GM23248 (cell line): ENCODE measurements at regions of chr13 and their contacts with region 1.

Region 1: DNA sequence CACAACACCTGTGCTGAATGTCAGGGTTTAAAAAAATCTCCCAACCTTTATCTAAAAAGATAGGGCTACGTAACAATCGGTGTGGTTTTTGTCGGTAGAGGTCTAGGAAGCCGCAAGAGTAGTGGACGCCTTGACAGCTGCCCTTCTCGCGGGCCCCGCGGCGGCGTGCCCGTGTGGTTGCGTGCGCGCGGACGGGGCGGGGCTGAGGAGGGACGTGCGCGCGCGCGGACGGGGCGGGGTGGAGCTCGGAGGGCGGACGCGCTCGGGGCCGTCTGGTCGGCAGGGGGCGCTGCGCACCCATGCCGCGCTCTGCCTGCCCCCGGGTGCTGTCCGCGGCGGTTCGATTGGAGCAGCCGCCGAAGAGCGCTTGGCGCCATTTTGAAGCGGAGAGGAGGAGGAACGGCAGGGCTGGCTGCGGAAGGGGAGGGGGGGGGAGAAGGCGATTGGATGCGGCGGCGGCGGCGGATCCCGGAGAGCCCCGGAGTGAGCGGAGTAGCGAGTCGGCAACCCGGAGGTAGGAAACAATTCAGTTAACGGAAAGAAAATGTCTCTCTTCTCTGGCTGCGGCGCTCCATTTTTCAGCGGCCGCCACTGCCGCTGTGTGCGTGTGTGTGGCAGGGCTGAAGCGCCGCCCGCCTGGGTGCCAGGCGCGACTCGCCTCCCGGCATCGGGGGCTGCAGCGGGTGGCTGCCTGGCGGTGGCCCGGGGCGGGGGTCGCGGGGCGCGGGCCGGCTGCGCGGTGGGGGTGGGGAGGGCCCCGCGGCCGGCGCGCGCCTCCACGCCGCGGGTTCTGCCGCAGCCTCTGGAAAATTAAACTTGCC is at the start of gene PDS5B:
- DNase-seq: peak; percentile 98
- H3K4me3 ChIP-seq: peak within 1 kb of the TSS; percentile 97
- H3K27ac ChIP-seq: peak within 1 kb of the TSS; percentile 74
- H3K4me1 ChIP-seq: peaks cover 22% of the 10 kb centered on the region
- H3K27me3 ChIP-seq: no peaks in the 10 kb centered on the region
- total RNA-seq, gene PDS5B: 13.4 and 14.5 TPM in 2 replicates

Region 2: GRCh38 chr13:33723772-33724435 is 1137.6 kb after region 1 on chr13:
- in situ Hi-C with region 1: loop called (anchors 25 kb)
- DNase-seq: peak; percentile 90
- H3K4me3 ChIP-seq: no peak overlapping the region
- H3K27ac ChIP-seq: no peak overlapping the region
- H3K4me1 ChIP-seq: peaks cover 45% of the 10 kb centered on the region
- H3K27me3 ChIP-seq: no peaks in the 10 kb centered on the region